ENCODE measurements at regions of chr2 and their contacts with region 1.

Region 1: GRCh38 chr2:162073888-162074645 is at the start of gene DPP4:
- DNase-seq: peak; percentile 31 to 68 (median 61)
- ATAC-seq: peak; percentile 88
- H3K4me3 ChIP-seq: peak within 1 kb of the TSS; percentile 95
- H3K4me3 Mint-ChIP-seq: peak within 1 kb of the TSS; percentile 92 to 100 (median 98)
- H3K27ac ChIP-seq: peak within 1 kb of the TSS; percentile 84
- H3K27ac Mint-ChIP-seq: peak within 1 kb of the TSS; percentile 86 to 98 (median 94)
- H3K4me1 ChIP-seq: peaks cover 0 to 28% of the 10 kb centered on the region in 2 donors
- H3K4me1 Mint-ChIP-seq: peaks cover 30 to 60% (median 52%) of the 10 kb centered on the region in 7 donors
- H3K27me3 ChIP-seq: no peaks in the 10 kb centered on the region
- H3K27me3 Mint-ChIP-seq: peaks cover 0 to 5% (median 0%) of the 10 kb centered on the region in 5 donors
- total RNA-seq, gene DPP4: 35.7 to 188 (median 41.6) TPM

Region 2: GRCh38 chr2:162007447-162008040 is 66.5 kb before region 1 on chr2:
- CTCF ChIA-PET with region 1: interaction called, 19 read pairs
- POLR2A ChIA-PET with region 1: interaction called, 18 read pairs
- intact Hi-C with region 1: loop called (anchors 1 kb)
- DNase-seq: peak in 5 of 9 donors; percentile 32 to 54 (median 41)
- ATAC-seq: no peak
- H3K4me3 ChIP-seq: no peak overlapping the region
- H3K4me3 Mint-ChIP-seq: no peak overlapping the region
- H3K27ac ChIP-seq: no peak overlapping the region
- H3K27ac Mint-ChIP-seq: peak overlapping the region in 7 of 9 donors; percentile 23 to 86 (median 47)
- H3K4me1 ChIP-seq: peaks cover 18 to 40% of the 10 kb centered on the region in 2 donors
- H3K4me1 Mint-ChIP-seq: peaks cover 18 to 64% (median 52%) of the 10 kb centered on the region in 7 donors
- H3K27me3 ChIP-seq: no peaks in the 10 kb centered on the region
- H3K27me3 Mint-ChIP-seq: no peaks in the 10 kb centered on the region

Region 3: DNA sequence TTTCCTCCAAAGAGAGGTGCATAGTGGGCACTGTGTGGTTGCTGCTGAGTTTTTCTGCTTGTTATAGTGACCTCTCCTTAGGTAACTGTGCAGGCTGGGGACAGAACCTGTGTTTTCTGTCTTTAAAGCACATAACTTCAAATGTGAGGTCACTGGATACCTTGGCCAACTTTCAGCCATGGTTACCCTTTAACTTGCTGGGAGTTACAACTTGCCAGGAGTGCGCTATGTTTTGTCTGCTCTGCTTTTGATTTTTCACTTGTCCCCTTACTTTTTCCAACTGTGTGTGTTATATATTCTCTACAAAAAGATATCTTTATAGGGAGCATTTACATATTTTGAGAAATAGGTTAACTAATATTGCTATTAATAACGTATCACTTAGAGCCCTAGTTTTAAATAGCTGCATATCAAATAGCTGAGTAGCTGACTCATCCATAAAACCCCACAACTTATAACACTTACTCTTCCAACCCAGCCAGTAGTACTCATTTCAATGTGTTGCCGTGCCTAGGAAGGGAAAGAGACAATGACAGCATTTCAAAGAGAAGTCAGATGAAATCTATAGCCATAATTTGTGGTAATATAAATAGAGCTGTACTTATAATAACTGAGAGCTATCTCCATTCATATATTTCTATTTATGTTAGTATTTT is 51.6 kb before region 1 on chr2:
- CTCF ChIA-PET with region 1: no interaction called
- POLR2A ChIA-PET with region 1: interaction called, 13 read pairs
- intact Hi-C with region 1: no loop called
- DNase-seq: no peak
- ATAC-seq: no peak
- H3K4me3 ChIP-seq: no peak overlapping the region
- H3K4me3 Mint-ChIP-seq: peak overlapping the region in 7 of 10 donors; percentile 43 to 76 (median 69)
- H3K27ac ChIP-seq: no peak overlapping the region
- H3K27ac Mint-ChIP-seq: peak overlapping the region; percentile 31 to 94 (median 85)
- H3K4me1 ChIP-seq: peaks cover 0 to 27% of the 10 kb centered on the region in 2 donors
- H3K4me1 Mint-ChIP-seq: peaks cover 22 to 66% (median 60%) of the 10 kb centered on the region in 7 donors
- H3K27me3 ChIP-seq: no peaks in the 10 kb centered on the region
- H3K27me3 Mint-ChIP-seq: no peaks in the 10 kb centered on the region

Region 4: DNA sequence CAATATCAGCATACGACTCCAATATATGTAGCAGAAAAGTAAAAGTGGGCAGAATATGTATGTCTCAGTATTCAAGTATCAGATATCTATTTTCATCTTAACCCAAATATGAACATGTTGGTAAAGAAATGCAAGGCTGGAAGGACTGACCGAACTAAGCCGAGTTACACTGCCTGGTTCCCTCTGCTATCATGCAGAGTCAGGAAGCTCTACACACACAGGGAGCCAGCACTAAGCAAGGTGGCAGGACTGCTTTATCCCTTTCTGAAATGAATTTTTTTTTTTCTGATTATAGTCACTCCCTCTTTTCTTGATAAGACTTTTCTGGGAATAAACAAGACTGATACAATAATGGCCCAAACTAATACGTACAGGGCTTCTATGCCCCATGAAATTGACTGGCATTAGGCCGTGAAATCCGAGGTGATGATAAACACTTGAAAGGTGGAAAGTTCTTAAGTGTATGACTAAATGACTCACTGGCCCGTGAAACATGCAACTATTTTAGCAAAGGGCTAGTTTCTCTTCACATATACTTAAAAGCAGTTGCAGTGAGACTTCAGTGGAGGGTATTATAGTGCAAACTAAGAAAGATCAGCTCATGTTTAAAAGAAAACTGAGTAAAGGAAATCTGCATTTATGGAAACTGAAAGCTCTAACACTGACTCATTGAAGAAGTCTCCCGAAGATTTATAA is 14.9 kb before region 1 on chr2:
- CTCF ChIA-PET with region 1: interaction called, 4 read pairs
- POLR2A ChIA-PET with region 1: interaction called, 68 read pairs
- intact Hi-C with region 1: loop called (anchors 1 kb)
- DNase-seq: no peak
- ATAC-seq: peak; percentile 33
- H3K4me3 ChIP-seq: peak overlapping the region; percentile 48
- H3K4me3 Mint-ChIP-seq: peak overlapping the region; percentile 64 to 83 (median 76)
- H3K27ac ChIP-seq: peak overlapping the region; percentile 39
- H3K27ac Mint-ChIP-seq: peak overlapping the region; percentile 45 to 91 (median 84)
- H3K4me1 ChIP-seq: peaks cover 35 to 42% of the 10 kb centered on the region in 2 donors
- H3K4me1 Mint-ChIP-seq: peaks cover 32 to 92% (median 88%) of the 10 kb centered on the region in 7 donors
- H3K27me3 ChIP-seq: no peaks in the 10 kb centered on the region
- H3K27me3 Mint-ChIP-seq: no peaks in the 10 kb centered on the region

Region 5: DNA sequence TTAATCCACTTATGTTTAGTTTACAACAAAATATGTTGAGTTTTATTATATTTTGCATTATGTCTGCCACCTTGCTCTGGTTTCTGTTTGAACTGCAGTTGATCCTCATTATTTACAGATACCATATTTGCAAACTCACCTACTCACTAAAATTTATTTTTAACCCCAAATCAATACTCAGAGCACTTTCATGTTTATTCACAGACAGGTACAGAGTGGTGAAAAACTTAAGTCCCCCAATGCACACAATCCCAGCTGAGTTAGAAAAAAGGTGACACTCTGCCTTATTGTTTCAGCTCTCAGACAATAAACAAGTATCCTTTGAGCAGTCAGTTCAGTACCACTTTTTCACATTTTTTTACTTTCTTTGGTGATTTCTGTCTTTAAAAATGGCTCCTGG is 64.2 kb after region 1 on chr2:
- CTCF ChIA-PET with region 1: no interaction called
- POLR2A ChIA-PET with region 1: no interaction called
- intact Hi-C with region 1: no loop called
- DNase-seq: no peak
- ATAC-seq: no peak
- H3K4me3 ChIP-seq: no peak overlapping the region
- H3K4me3 Mint-ChIP-seq: no peak overlapping the region
- H3K27ac ChIP-seq: no peak overlapping the region
- H3K27ac Mint-ChIP-seq: no peak overlapping the region
- H3K4me1 ChIP-seq: no peaks in the 10 kb centered on the region
- H3K4me1 Mint-ChIP-seq: no peaks in the 10 kb centered on the region
- H3K27me3 ChIP-seq: peaks cover 0 to 3% of the 10 kb centered on the region in 2 donors
- H3K27me3 Mint-ChIP-seq: peaks cover 0 to 53% (median 21%) of the 10 kb centered on the region in 5 donors

Measured in naive thymus-derived CD4-positive, alpha-beta T cell (primary cell).